ENCODE measurements at regions of chr15 and their contacts with region 1.

Region 1: GRCh38 chr15:89068325-89068784 is 19.9 kb upstream of the ABHD2 start:
- H3K4me3 Mint-ChIP-seq: no peak overlapping the region
- H3K27ac Mint-ChIP-seq: peak overlapping the region; percentile 57
- H3K4me1 Mint-ChIP-seq: peaks cover 33% of the 10 kb centered on the region
- H3K27me3 Mint-ChIP-seq: peaks cover 1% of the 10 kb centered on the region

Region 2: DNA sequence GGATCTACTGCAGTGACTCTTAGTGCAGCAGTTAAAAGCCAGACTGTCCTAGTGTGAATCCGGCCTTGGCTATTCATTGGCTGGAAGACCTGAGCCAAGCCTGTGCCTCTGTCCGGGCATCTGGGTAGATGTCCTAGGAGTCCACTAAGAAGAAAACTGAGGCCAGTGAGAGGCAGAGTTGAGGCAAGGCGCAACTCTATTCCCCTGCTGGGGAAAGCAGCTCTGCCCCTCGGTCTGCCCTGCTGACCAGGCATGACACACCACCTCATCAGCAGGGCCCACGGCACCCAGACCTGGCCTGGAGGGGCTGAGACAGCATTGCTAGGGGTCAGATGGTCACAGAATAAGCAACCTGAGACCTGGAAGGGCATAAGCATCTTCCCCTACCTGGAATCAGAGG is 26.8 kb before region 1 on chr15:
- intact Hi-C with region 1: no loop called
- H3K4me3 Mint-ChIP-seq: no peak overlapping the region
- H3K27ac Mint-ChIP-seq: no peak overlapping the region
- H3K4me1 Mint-ChIP-seq: no peaks in the 10 kb centered on the region
- H3K27me3 Mint-ChIP-seq: peaks cover 5% of the 10 kb centered on the region

Region 3: GRCh38 chr15:89090791-89091626 is 22.7 kb after region 1 on chr15:
- intact Hi-C with region 1: loop called (anchors 2 kb)
- H3K4me3 Mint-ChIP-seq: peak overlapping the region; percentile 71
- H3K27ac Mint-ChIP-seq: no peak overlapping the region
- H3K4me1 Mint-ChIP-seq: peaks cover 67% of the 10 kb centered on the region
- H3K27me3 Mint-ChIP-seq: no peaks in the 10 kb centered on the region

Measured in dendritic cell treated with granulocyte-macrophage colony-stimulating factor and Interleukin-4, amounts not matched to agents 40 ng/mL and 50 ng/mL, for 4 days (primary cell).